Pancreas (tissue), 10 donors: ENCODE measurements at regions of chr1 and their contacts with region 1.

Region 1: GRCh38 chr1:51906306-51907078 is 28.0 kb upstream of the NRDC start:
- DNase-seq: no peak
- ATAC-seq: no peak
- H3K4me3 ChIP-seq: no peak overlapping the region
- H3K27ac ChIP-seq: no peak overlapping the region
- H3K4me1 ChIP-seq: no peaks in the 10 kb centered on the region
- H3K27me3 ChIP-seq: peaks cover 0 to 3% (median 0%) of the 10 kb centered on the region in 4 donors
- CTCF ChIP-seq: no peak

Region 2: GRCh38 chr1:51829058-51829457 is 77.4 kb before region 1 on chr1:
- intact Hi-C with region 1: no loop called
- DNase-seq: no peak
- ATAC-seq: no peak
- H3K4me3 ChIP-seq: no peak overlapping the region
- H3K27ac ChIP-seq: no peak overlapping the region
- H3K4me1 ChIP-seq: no peaks in the 10 kb centered on the region
- H3K27me3 ChIP-seq: no peaks in the 10 kb centered on the region
- CTCF ChIP-seq: no peak

Region 3: DNA sequence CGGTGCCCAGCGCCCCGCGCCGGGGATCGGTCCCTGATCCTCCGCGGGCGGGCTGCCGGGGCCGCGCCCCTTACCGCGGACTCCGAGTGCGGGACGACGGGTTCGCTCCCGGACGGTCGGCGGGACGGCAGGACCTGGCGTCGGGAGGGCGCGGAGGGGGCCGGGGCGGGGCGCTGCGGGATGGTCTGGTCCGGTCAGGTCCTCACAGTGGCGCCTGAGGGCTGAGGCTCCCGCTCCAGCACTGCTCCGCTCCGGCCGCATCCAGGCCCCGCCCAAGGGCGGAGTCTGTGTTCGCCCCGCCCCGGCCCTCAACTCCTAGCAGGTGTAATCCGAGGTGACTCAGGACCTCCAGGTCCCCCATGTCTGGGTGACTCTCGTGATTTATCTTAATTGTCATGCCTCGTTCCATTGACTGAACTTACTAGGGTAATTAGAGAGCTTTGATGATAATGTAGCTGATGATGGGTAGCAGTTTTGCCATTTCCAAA is 84.0 kb after region 1 on chr1 and contains the start of gene RAB3B:
- intact Hi-C with region 1: loop called in 2 of 3 experiments (anchors 5 to 10 kb)
- DNase-seq: peak; percentile 70 to 93 (median 83)
- ATAC-seq: peak; percentile 95 to 100 (median 98)
- H3K4me3 ChIP-seq: peak within 1 kb of the TSS; percentile 33 to 57 (median 40)
- H3K27ac ChIP-seq: no peak within 1 kb of the TSS
- H3K4me1 ChIP-seq: no peaks in the 10 kb centered on the region
- H3K27me3 ChIP-seq: no peaks in the 10 kb centered on the region
- CTCF ChIP-seq: no peak
- total RNA-seq, gene RAB3B: 0.69 to 5.7 (median 1.6) TPM

Region 4: GRCh38 chr1:52033190-52034049 is 126.9 kb after region 1 on chr1 and contains the start of gene KTI12:
- intact Hi-C with region 1: no loop called
- DNase-seq: peak; percentile 80 to 91 (median 82)
- ATAC-seq: peak; percentile 85 to 93 (median 90)
- H3K4me3 ChIP-seq: peak within 1 kb of the TSS; percentile 52 to 85 (median 70)
- H3K27ac ChIP-seq: peak within 1 kb of the TSS; percentile 64 to 84 (median 80)
- H3K4me1 ChIP-seq: peaks cover 22 to 32% (median 29%) of the 10 kb centered on the region in 3 donors
- H3K27me3 ChIP-seq: no peaks in the 10 kb centered on the region
- CTCF ChIP-seq: no peak
- total RNA-seq, gene KTI12: 2.3 to 4.7 (median 3.4) TPM

Region 5: GRCh38 chr1:52967666-52968065 is 1061.2 kb after region 1 on chr1:
- intact Hi-C with region 1: no loop called
- DNase-seq: no peak
- ATAC-seq: no peak
- H3K4me3 ChIP-seq: no peak overlapping the region
- H3K27ac ChIP-seq: no peak overlapping the region
- H3K4me1 ChIP-seq: no peaks in the 10 kb centered on the region
- H3K27me3 ChIP-seq: no peaks in the 10 kb centered on the region
- CTCF ChIP-seq: no peak